ENCODE measurements at regions of chrX and their contacts with region 1.

Region 1: DNA sequence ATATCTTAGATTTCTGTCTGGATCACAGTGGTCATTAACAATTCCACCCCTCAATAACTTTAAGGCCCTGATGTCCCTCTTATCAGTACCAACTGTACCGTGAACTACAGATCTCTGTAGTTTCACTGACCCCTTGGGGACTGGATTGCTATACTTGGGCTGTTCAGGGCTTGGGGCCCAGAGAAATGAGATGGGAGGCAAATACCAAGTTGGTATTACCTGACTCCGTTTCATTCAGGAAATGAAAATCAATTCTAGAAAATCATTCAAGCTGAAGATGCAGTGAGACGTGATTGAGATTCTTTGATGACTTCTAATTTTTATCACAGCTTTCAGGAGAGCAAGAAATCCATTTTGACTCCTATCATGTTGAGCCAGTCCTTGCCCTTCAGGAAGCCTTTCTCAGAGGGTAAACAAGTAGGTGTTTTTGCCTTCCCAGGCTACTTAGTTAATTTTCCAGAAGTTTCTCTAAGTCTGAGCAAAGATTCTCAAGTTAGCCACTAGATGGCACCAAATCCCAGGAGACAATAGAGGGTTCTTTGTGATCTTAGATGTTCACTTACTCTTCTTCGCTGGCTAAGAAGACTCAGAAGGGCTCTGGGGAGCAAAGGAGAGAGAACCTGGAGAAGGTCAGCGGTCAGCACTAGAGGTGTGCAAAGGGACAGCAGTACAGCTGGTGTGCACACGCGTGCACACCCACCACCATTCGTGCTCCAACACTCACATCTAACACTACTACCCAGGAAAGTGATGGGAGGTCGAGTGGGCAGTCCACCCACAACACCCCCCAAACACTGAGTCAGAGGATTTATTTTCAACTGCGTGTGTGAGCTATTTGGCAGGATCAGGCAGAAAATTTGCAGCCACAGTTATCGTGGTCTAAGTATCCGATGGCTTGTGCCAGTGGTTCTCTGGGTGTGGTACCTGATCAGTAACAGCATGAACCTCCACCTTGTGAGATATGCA is 7.4 kb downstream of the HNRNPH2 start:
- DNase-seq: peak in 1 of 10 donors; percentile 5

Region 2: GRCh38 chrX:101485199-101485949 is 69.9 kb after region 1 on chrX and contains the start of gene ARMCX4:
- intact Hi-C with region 1: loop called (anchors 10 kb)
- DNase-seq: peak; percentile 58 to 97 (median 74)

Region 3: DNA sequence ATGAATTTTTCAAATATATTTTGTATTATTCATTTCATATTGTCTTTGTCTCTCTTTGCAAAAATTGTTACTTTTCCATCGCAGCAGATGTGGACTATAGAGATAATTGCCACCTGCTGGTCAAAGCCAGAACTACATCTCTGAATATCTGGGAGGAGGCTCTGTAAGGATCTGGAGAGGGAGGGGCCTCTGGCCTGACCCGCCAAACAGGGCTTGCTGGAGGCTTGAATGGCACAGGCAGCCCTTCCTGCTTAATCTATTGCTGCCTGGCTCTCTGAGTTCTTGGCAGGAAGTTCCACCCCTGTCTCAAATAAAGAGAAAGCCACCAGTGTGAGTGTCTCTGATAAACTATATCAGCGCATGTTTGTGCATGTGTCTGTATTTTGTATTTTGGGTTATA is 383.9 kb after region 1 on chrX:
- intact Hi-C with region 1: loop called (anchors 2 kb)
- DNase-seq: peak; percentile 51 to 94 (median 66)

Region 4: DNA sequence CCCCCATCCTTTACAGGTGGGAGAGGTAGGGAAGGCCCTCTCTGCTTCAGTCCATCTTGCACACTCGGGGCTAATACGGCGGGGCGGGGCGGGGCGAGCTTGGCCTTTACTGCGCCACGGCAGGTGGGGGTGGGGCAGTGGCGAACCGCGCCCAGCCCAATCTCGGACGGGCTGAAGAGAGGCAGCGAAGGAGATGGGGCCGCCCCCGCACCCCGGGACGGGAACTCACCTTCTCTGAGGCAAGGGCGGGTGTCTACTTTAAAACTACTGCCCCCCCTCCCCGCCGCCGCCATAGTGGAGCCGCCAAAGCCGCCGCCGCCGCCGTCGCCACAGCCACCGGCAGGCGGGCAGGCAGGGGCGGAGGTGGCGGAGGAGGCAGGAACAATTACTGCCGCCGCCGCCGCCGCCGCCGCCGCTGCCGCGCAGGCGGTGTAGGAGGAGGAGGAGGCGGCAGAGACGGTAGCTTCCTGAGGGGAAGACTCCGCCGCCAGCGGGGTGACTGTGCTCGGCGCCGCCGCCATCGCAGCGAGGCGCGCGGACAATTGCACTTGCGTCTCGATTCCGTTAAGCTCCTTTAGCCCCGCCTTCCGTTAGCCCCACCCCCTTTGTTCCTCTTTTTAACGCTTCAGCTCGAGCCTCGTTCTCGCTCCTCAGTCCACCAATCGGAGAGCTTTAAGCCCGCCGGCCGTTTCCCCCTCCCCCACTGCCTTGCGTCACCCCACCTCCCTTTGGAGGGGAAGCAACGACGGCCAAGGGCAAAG is 516.2 kb after region 1 on chrX and contains the start of gene ZMAT1:
- intact Hi-C with region 1: loop called (anchors 10 kb)
- DNase-seq: peak; percentile 78 to 97 (median 86)